K562 (cell line): ENCODE measurements at regions of chr9 and their contacts with region 1.

Region 1: DNA sequence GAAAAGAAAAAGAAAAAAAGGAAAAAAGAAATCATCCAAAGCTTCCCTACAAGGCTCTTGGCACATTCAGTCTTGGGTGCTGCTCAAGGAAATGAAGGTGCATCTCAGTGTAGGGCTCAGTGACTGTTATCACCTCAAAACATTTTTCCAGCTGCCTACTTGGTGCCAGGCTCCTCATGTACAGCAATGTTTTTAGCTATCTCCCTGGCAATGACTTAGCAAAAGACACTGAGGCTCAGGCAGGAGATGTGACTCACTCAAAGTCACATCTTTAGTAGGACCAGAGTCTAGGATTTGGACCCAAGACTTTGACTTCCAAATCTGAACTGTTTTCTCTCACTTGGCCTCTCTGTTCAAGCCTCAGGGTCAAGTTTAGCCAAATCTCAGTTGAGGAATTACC is 264.2 kb downstream of the CRB2 start:
- DNase-seq: peak in 1 of 4 experiments; percentile 16
- ATAC-seq: no peak
- H3K4me3 ChIP-seq: no peak overlapping the region
- H3K27ac ChIP-seq: no peak overlapping the region
- H3K4me1 ChIP-seq: peaks cover 0 to 3% of the 10 kb centered on the region in 2 experiments; a peak in 2 of 5 replicates
- H3K27me3 ChIP-seq: no peaks in the 10 kb centered on the region
- CTCF ChIP-seq: no peak
- EP300 ChIP-seq: no peak
- POLR2A ChIP-seq: no peak
- RAD21 ChIP-seq: no peak

Region 2: DNA sequence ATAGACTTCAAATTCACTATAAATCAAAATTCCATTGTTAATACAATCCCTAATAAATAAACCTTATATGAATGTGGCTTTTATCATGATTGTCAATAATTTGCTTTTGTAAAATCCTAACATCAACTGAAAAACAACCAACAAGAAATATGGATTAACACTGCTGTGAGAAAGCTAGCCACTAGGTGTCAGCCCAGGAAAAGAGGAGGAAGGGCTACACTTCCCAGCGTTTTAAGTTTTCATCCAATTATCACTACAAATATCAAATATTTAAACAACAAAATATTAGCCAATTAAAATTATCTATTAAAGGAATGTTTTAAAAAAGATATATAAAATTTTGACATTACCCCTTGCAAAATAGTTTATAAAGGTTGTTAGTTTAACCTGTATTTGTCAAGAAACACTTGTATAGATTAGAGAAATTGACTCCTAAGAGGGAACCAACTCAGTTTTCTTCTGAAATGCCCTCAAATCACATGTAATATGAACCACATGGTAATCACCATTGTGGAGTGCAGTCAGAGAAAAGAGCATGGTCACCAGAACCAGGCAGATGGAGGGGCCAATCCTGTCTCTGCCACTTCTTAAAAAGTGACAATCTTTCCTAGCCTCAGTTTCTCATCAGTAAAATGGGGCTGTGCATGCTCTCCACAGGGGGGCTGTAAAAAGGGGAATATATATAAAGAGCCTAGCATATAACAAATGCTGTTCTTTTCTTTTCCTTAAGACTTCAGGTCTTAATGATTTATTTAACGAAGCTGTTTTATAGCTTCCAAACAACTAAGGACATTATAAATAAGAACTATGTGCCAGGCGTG is 76.0 kb before region 1 on chr9:
- CTCF ChIA-PET with region 1: no interaction called
- POLR2A ChIA-PET with region 1: no interaction called
- in situ Hi-C with region 1: no loop called
- intact Hi-C with region 1: no loop called
- DNase-seq: peak; percentile 45 to 55 (median 50)
- ATAC-seq: peak; percentile 81
- H3K4me3 ChIP-seq: no peak overlapping the region
- H3K27ac ChIP-seq: no peak overlapping the region
- H3K4me1 ChIP-seq: peaks cover 5 to 6% of the 10 kb centered on the region in 2 experiments; a peak in 4 of 5 replicates
- H3K27me3 ChIP-seq: no peaks in the 10 kb centered on the region
- CTCF ChIP-seq: peak; percentile 70 to 89 (median 75)
- EP300 ChIP-seq: no peak
- POLR2A ChIP-seq: no peak
- RAD21 ChIP-seq: peak; percentile 94 to 96

Region 3: GRCh38 chr9:123562844-123563346 is 57.3 kb before region 1 on chr9:
- CTCF ChIA-PET with region 1: no interaction called
- POLR2A ChIA-PET with region 1: no interaction called
- in situ Hi-C with region 1: no loop called
- intact Hi-C with region 1: loop called (anchors 10 kb)
- DNase-seq: no peak
- ATAC-seq: no peak
- H3K4me3 ChIP-seq: no peak overlapping the region
- H3K27ac ChIP-seq: no peak overlapping the region
- H3K4me1 ChIP-seq: no peaks in the 10 kb centered on the region
- H3K27me3 ChIP-seq: no peaks in the 10 kb centered on the region
- CTCF ChIP-seq: no peak
- EP300 ChIP-seq: no peak
- POLR2A ChIP-seq: no peak
- RAD21 ChIP-seq: no peak